ENCODE measurements at regions of chr6 and their contacts with region 1.

Region 1: GRCh38 chr6:52598123-52598823 is 21.4 kb upstream of the TRAM2 start:
- H3K4me3 ChIP-seq: no peak overlapping the region
- H3K27ac ChIP-seq: no peak overlapping the region
- H3K4me1 ChIP-seq: peaks cover 4% of the 10 kb centered on the region; the same call in 1 of the 2 replicates
- CTCF ChIP-seq: peak; percentile 86

Region 2: GRCh38 chr6:52497652-52498408 is 100.4 kb before region 1 on chr6:
- CTCF ChIA-PET with region 1: interaction called, 18 read pairs
- POLR2A ChIA-PET with region 1: no interaction called
- H3K4me3 ChIP-seq: no peak overlapping the region
- H3K27ac ChIP-seq: no peak overlapping the region
- H3K4me1 ChIP-seq: peaks cover 10% of the 10 kb centered on the region
- CTCF ChIP-seq: no peak

Region 3: DNA sequence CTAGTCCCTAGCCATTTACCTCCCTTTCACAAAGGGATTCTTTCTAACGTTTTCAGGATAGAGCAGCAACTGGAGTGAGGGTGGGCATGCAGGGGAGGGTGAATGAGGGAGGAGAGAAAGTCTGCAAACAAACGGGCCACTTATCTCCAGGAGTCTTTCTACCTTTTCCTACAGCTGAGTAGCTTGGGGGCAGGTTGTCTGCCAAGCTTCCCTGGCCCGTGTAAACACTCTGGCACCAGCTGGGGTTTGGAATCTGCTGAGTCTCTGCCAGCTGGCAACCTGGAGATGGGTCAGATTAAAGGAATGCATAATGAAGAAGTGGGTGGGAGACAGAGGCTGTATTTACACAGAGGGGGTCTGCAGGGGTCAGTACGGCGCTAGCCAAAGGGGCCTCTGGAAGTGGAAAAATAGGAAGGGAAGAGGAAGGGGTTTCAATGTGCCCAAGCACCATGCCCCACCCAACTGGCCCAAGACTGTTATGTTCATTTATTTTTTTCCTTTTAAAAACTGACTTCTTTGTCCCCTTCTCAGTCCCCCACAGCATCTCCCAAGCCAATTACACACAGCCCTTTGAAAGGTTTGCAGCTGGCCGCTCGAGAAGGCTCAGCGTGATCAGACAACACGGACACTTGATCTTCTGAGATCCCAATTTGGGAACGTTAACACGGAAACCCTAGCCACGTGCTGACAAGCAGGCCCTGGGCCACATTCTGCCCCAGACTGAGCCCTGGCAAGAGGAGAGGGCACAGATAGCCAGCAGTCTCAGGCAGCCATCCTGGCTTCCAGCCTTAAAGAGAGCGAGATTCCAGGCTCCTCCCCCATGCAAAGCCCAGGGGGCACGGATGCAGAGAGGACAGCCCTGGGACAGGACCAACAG is 46.6 kb before region 1 on chr6:
- CTCF ChIA-PET with region 1: interaction called, 16 read pairs
- POLR2A ChIA-PET with region 1: no interaction called
- H3K4me3 ChIP-seq: no peak overlapping the region
- H3K27ac ChIP-seq: no peak overlapping the region; the same call in 1 of the 2 replicates
- H3K4me1 ChIP-seq: peaks cover 37% of the 10 kb centered on the region
- CTCF ChIP-seq: no peak

Region 4: DNA sequence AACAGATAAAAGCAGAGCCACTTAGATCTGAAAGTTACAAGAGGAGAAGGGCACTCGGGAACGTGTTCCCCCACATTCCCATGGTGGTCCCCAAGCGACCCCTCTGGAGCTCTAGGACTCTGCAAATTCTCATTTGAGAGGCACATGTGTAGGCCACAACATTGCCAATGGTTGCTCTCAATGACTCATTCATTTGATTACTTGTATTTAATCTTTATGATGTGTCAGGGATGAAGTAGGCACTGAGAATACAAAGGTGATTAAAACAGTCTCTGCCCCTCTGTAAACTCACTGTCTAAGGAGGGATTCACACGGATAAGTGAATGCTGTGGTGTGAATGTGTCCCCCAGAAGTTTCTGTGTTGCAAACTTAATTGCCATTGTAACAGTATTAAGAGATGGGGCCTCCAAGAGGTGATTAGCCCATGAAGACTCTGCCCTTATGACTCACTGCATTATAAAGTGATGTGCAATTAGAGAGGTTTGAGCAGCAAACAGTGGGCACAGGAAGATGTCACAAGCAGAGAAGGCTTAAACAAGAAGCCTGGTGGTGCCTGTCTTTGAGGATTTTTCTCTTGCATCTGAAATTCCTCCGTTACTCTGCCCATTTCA is 12.6 kb after region 1 on chr6:
- CTCF ChIA-PET with region 1: interaction called, 18 read pairs
- POLR2A ChIA-PET with region 1: no interaction called
- H3K4me3 ChIP-seq: no peak overlapping the region
- H3K27ac ChIP-seq: no peak overlapping the region
- H3K4me1 ChIP-seq: peaks cover 3% of the 10 kb centered on the region; the same call in 1 of the 2 replicates
- CTCF ChIP-seq: no peak

Region 5: GRCh38 chr6:52640170-52640569 is 41.9 kb after region 1 on chr6:
- CTCF ChIA-PET with region 1: interaction called, 11 read pairs
- POLR2A ChIA-PET with region 1: no interaction called
- H3K4me3 ChIP-seq: no peak overlapping the region
- H3K27ac ChIP-seq: no peak overlapping the region
- H3K4me1 ChIP-seq: peaks cover 3% of the 10 kb centered on the region
- CTCF ChIP-seq: no peak

Region 6: GRCh38 chr6:52653151-52653550 is 54.9 kb after region 1 on chr6:
- CTCF ChIA-PET with region 1: interaction called, 15 read pairs
- POLR2A ChIA-PET with region 1: interaction called, 3 read pairs
- H3K4me3 ChIP-seq: no peak overlapping the region
- H3K27ac ChIP-seq: no peak overlapping the region
- H3K4me1 ChIP-seq: no peaks in the 10 kb centered on the region
- CTCF ChIP-seq: no peak

Measured in HEK293 (cell line).